ENCODE measurements at regions of chr20 and their contacts with region 1.

Region 1: DNA sequence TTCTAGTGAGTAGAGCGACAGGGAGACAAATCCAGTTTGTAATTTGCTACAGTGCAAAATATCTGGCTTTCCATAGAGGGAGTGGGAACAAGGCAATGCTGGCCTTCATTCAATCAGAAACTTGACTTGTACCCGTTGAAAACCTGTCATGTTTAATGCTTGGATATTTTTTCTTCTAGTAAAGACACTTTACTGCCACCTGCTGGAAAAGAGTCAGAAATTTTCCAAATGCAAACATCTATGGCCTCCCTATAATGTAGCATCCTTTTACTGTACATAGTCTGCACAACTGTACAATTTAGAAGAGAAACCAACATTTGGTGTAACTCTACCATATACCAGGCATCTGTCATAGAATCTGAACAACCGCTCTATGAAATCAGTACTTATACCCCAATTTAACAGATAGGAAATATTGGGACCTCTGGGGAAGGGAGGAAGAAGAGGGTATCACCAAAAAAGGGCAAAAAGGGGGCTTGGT is 16.7 kb upstream of the TBC1D20 start:
- DNase-seq: peak; percentile 19
- ATAC-seq: peak; percentile 82
- H3K4me3 Mint-ChIP-seq: no peak overlapping the region
- H3K27ac Mint-ChIP-seq: peak overlapping the region; percentile 30
- H3K4me1 Mint-ChIP-seq: peaks cover 28% of the 10 kb centered on the region
- H3K27me3 Mint-ChIP-seq: no peaks in the 10 kb centered on the region

Region 2: GRCh38 chr20:362271-363254 is 116.4 kb before region 1 on chr20:
- CTCF ChIA-PET with region 1: interaction called, 10 read pairs
- POLR2A ChIA-PET with region 1: no interaction called
- intact Hi-C with region 1: no loop called
- DNase-seq: peak; percentile 86
- ATAC-seq: peak; percentile 83
- H3K4me3 Mint-ChIP-seq: peak overlapping the region; percentile 33
- H3K27ac Mint-ChIP-seq: peak overlapping the region; percentile 66
- H3K4me1 Mint-ChIP-seq: peaks cover 39% of the 10 kb centered on the region
- H3K27me3 Mint-ChIP-seq: no peaks in the 10 kb centered on the region

Region 3: GRCh38 chr20:433300-433975 is 45.6 kb before region 1 on chr20:
- CTCF ChIA-PET with region 1: interaction called, 4 read pairs
- POLR2A ChIA-PET with region 1: no interaction called
- intact Hi-C with region 1: loop called (anchors 2 to 5 kb)
- DNase-seq: peak; percentile 86
- ATAC-seq: peak; percentile 86
- H3K4me3 Mint-ChIP-seq: peak overlapping the region; percentile 51
- H3K27ac Mint-ChIP-seq: peak overlapping the region; percentile 94
- H3K4me1 Mint-ChIP-seq: peaks cover 67% of the 10 kb centered on the region
- H3K27me3 Mint-ChIP-seq: no peaks in the 10 kb centered on the region

Region 4: GRCh38 chr20:438571-439469 is 40.2 kb before region 1 on chr20:
- CTCF ChIA-PET with region 1: interaction called, 3 read pairs
- POLR2A ChIA-PET with region 1: no interaction called
- intact Hi-C with region 1: loop called in 1 of 2 experiments (anchors 5 kb)
- DNase-seq: peak; percentile 71
- ATAC-seq: peak; percentile 78
- H3K4me3 Mint-ChIP-seq: peak overlapping the region; percentile 60
- H3K27ac Mint-ChIP-seq: peak overlapping the region; percentile 88
- H3K4me1 Mint-ChIP-seq: peaks cover 58% of the 10 kb centered on the region
- H3K27me3 Mint-ChIP-seq: no peaks in the 10 kb centered on the region

Region 5: DNA sequence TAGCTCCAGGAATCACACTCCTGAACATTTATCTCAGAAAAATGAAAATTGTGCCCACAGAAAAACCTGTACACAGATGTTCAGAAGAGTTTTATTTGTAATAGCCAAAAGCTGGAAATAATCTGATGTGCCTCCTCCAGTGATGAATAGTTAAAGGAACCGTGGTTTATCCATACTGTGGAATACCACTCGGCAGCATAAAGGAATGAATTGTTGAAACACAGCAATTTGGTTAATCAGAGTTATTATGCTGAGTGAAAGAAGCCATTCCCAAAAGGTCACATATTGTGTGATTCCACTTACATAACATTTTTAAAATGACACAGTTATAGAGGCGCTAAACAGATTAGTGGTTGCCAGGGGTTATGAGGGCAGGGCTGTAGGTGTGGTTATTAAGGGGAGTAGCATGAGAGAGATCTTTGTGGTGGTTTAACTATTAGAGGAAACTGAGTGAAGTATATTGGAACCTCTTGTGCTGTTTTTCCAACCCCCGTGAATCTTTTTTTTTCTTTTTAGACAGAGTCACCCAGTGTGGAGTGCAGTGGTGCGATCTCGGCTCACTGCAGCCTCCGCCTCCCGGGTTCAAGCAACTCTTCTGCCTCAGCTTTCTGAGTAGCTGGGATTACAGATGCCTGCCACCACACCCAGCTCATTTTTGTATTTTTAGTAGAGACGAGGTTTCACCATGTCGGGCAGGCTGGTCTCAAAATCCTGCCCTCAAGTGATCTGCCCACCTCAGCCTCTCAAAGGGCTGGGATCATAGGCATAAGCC is 665.6 kb after region 1 on chr20:
- CTCF ChIA-PET with region 1: no interaction called
- POLR2A ChIA-PET with region 1: no interaction called
- intact Hi-C with region 1: no loop called
- DNase-seq: no peak
- ATAC-seq: no peak
- H3K4me3 Mint-ChIP-seq: no peak overlapping the region
- H3K27ac Mint-ChIP-seq: no peak overlapping the region
- H3K4me1 Mint-ChIP-seq: peaks cover 5% of the 10 kb centered on the region
- H3K27me3 Mint-ChIP-seq: no peaks in the 10 kb centered on the region